ENCODE measurements at regions of chr10 and their contacts with region 1.

Region 1: GRCh38 chr10:13219685-13220670 is 14.2 kb downstream of the UCMA start:
- DNase-seq: peak; percentile 56 to 62
- ATAC-seq: peak; percentile 88 to 96
- H3K4me3 ChIP-seq: no peak overlapping the region
- H3K27ac ChIP-seq: no peak overlapping the region
- H3K4me1 ChIP-seq: 0 out of 3 replicates have a peak, but pooled peaks cover 2% of the 10 kb centered on the region
- CTCF ChIP-seq: no peak
- EP300 ChIP-seq: no peak
- POLR2A ChIP-seq: no peak
- RAD21 ChIP-seq: peak in 1 of 2 experiments; percentile 30; a peak in 1 of 5 replicates

Region 2: DNA sequence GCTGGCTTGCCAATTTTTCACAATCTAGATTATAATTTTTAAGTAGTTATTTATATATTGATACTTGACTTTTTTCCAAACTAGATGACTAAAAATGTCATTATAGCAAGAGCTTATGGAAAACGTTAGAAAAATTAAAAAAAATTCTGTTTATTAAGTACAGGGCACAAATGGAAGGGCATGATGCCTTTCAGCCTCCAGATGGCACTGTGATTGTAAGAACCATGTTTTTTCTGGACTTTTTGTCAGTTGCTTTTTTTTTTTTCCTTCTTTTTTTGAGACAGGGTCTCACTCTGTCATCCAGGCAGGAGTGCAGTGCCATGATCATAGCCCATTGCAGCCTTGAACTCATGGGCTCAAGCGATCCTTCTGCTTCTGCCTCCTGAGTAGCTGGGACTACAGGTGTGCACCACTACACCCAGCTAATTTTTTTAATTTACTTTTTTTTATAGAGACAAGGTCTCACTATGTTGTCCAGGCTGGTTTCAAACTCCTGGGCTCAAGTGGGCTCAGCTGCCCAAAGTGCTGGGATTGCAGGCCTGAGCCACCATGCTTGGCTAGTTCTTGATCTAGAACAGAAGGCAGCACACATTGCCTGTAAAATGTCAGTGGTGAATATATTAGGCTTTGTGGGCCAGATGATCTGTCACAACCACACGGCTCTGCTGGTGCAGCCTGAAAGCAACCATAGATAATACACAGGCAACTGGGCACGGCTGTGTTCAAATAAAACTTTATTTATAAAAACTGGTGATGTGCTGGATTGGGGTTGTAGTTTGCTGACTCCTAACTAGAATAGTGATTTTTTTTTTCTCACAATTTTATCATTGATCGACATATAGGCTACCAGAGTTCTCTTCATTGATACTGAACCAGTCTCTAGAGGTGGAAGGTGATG is 13.2 kb before region 1 on chr10:
- CTCF ChIA-PET with region 1: interaction called, 16 read pairs
- POLR2A ChIA-PET with region 1: no interaction called
- DNase-seq: peak in 1 of 2 experiments; percentile 47
- ATAC-seq: peak in 1 of 2 experiments; percentile 60; a peak in 2 of 6 replicates
- H3K4me3 ChIP-seq: no peak overlapping the region
- H3K27ac ChIP-seq: no peak overlapping the region
- H3K4me1 ChIP-seq: no peaks in the 10 kb centered on the region
- CTCF ChIP-seq: peak; percentile 61
- EP300 ChIP-seq: no peak
- POLR2A ChIP-seq: no peak
- RAD21 ChIP-seq: peak; percentile 43 to 49; a peak in 4 of 5 replicates

Region 3: GRCh38 chr10:13310518-13311176 is 90.7 kb after region 1 on chr10:
- CTCF ChIA-PET with region 1: no interaction called
- POLR2A ChIA-PET with region 1: no interaction called
- DNase-seq: no peak
- ATAC-seq: peak; percentile 39 to 40; a peak in 3 of 6 replicates
- H3K4me3 ChIP-seq: no peak overlapping the region
- H3K27ac ChIP-seq: no peak overlapping the region
- H3K4me1 ChIP-seq: no peaks in the 10 kb centered on the region
- CTCF ChIP-seq: no peak
- EP300 ChIP-seq: no peak
- POLR2A ChIP-seq: no peak
- RAD21 ChIP-seq: no peak

Measured in A549 (cell line).